ENCODE measurements at regions of chr5 and their contacts with region 1.

Region 1: DNA sequence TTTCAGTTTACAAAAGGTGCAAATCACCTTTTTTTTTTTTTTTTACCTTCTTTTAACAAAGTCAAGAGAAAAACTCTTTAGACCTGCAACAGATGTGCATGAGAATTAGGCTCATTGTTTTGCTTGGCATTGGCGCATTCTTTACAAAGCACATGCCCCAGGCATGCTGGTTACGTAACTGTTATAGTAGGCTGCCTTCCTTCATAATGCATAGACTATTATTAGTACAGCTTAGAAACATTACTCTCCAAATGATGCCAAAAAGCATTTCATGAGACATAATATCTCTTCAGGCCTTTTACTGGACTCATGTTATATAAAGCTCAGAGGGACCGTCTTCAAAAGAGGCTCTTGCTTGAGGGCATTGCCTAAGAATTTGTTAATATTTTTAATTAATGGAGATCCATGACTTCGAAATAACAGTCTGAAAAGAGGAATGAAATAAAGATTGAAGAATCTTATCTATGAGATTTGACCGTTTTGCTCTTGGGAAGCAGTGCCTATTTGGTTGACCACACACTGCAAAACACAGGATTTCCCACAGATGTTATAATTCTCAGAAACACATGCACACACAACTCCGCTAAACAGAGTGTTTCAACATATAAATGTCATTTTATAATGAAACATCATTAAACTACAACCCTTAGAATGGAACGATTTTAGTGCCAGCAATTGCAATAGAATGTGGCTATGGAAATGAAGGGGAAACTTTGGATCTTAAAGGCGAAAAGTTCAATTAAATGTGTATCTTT is 478.7 kb downstream of the PRR16 start:
- DNase-seq: no peak
- ATAC-seq: no peak
- H3K4me3 Mint-ChIP-seq: no peak overlapping the region
- H3K27ac Mint-ChIP-seq: no peak overlapping the region
- H3K4me1 Mint-ChIP-seq: no peaks in the 10 kb centered on the region
- H3K27me3 Mint-ChIP-seq: no peaks in the 10 kb centered on the region

Region 2: GRCh38 chr5:120817044-120817985 is 125.5 kb before region 1 on chr5:
- CTCF ChIA-PET with region 1: no interaction called
- POLR2A ChIA-PET with region 1: no interaction called
- intact Hi-C with region 1: no loop called
- DNase-seq: no peak
- ATAC-seq: no peak
- H3K4me3 Mint-ChIP-seq: no peak overlapping the region
- H3K27ac Mint-ChIP-seq: no peak overlapping the region
- H3K4me1 Mint-ChIP-seq: no peaks in the 10 kb centered on the region
- H3K27me3 Mint-ChIP-seq: no peaks in the 10 kb centered on the region

Region 3: GRCh38 chr5:120874081-120874862 is 68.5 kb before region 1 on chr5:
- CTCF ChIA-PET with region 1: no interaction called
- POLR2A ChIA-PET with region 1: no interaction called
- intact Hi-C with region 1: no loop called
- DNase-seq: no peak
- ATAC-seq: no peak
- H3K4me3 Mint-ChIP-seq: no peak overlapping the region
- H3K27ac Mint-ChIP-seq: no peak overlapping the region
- H3K4me1 Mint-ChIP-seq: no peaks in the 10 kb centered on the region
- H3K27me3 Mint-ChIP-seq: no peaks in the 10 kb centered on the region

Region 4: DNA sequence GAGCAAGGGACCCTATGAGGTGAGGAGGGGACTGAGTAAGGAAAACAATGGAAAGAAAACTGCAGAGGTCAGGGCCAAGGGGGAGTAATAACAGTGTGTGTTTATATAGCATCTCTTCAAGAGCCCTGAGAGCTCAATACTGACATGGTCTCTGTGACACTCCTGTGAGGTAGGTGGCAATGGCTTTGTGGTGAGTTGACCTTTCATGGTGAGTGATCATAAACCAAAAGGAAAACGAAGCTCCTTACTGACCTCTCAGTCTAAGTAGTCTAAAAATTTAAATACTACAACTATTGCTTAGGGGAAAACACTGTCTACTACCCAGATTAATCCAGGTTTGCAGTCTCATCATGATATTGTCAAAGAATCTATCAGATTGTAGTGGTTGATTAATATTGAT is 1500.2 kb after region 1 on chr5:
- CTCF ChIA-PET with region 1: no interaction called
- POLR2A ChIA-PET with region 1: interaction called, 13 read pairs
- intact Hi-C with region 1: no loop called
- DNase-seq: no peak
- ATAC-seq: no peak
- H3K4me3 Mint-ChIP-seq: no peak overlapping the region
- H3K27ac Mint-ChIP-seq: no peak overlapping the region
- H3K4me1 Mint-ChIP-seq: no peaks in the 10 kb centered on the region
- H3K27me3 Mint-ChIP-seq: peaks cover 6% of the 10 kb centered on the region